ENCODE measurements at regions of chr1 and their contacts with region 1.

Region 1: DNA sequence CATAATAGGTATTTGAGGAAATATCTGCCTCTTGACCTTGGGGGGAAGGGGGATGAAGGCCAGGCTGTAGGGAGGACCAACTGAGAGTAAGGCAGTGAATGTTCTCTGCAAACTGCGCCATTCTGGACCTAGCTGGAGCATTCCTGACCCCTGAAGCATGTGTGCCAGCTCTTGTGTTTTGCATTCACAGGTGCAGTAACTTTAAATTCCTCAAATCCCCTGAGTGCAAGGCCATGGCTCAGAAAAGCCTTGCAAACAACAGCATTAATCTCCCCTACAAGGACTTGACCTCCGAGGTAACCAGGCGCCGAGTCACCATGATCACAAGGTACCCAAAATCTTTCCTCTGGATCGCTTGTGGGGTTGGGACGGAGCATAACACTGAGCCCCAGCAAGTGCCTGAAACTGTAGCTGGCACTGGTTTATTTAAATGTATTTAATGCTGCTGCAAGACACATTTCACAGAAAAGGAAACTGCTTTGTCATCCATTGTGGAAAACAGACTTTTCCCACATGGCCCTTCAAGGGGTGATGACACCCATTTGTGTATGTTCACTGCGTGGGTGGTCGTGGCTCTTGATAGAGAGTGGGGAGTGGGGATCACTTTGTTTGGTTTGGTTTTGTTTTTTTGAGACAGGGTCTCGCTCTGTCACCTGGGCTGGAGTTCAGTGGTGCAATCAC is 1.7 kb downstream of the MYOCOS start:
- DNase-seq: no peak
- H3K4me3 ChIP-seq: no peak overlapping the region
- H3K27ac ChIP-seq: no peak overlapping the region
- H3K4me1 ChIP-seq: no peaks in the 10 kb centered on the region
- H3K27me3 ChIP-seq: no peaks in the 10 kb centered on the region
- CTCF ChIP-seq: no peak

Region 2: GRCh38 chr1:171635661-171636060 is 11.9 kb after region 1 on chr1:
- CTCF ChIA-PET with region 1: interaction called, 13 read pairs
- POLR2A ChIA-PET with region 1: no interaction called
- intact Hi-C with region 1: no loop called
- DNase-seq: no peak
- H3K4me3 ChIP-seq: no peak overlapping the region
- H3K27ac ChIP-seq: no peak overlapping the region
- H3K4me1 ChIP-seq: no peaks in the 10 kb centered on the region
- H3K27me3 ChIP-seq: no peaks in the 10 kb centered on the region
- CTCF ChIP-seq: no peak

Region 3: DNA sequence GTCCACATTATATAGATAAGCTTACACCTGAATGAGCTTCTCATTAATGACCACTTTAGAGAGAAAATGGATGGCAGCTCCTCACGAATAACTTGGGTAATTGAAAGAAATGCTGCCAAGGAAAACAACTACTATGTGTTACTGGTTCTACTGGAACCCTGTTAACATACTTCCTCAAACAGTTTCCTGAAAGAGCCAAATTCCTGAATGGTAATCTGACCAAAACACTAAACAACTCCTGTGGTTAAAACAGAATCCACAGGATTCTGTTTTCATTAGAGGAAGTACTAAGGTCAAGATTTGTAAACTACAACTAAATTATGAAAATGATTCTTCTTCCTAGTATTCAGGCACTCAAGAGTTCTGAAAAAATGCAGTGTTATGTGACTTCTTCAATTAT is 324.7 kb after region 1 on chr1:
- CTCF ChIA-PET with region 1: no interaction called
- POLR2A ChIA-PET with region 1: no interaction called
- intact Hi-C with region 1: no loop called
- DNase-seq: no peak
- H3K4me3 ChIP-seq: no peak overlapping the region
- H3K27ac ChIP-seq: no peak overlapping the region
- H3K4me1 ChIP-seq: no peaks in the 10 kb centered on the region
- H3K27me3 ChIP-seq: no peaks in the 10 kb centered on the region
- CTCF ChIP-seq: no peak

Region 4: DNA sequence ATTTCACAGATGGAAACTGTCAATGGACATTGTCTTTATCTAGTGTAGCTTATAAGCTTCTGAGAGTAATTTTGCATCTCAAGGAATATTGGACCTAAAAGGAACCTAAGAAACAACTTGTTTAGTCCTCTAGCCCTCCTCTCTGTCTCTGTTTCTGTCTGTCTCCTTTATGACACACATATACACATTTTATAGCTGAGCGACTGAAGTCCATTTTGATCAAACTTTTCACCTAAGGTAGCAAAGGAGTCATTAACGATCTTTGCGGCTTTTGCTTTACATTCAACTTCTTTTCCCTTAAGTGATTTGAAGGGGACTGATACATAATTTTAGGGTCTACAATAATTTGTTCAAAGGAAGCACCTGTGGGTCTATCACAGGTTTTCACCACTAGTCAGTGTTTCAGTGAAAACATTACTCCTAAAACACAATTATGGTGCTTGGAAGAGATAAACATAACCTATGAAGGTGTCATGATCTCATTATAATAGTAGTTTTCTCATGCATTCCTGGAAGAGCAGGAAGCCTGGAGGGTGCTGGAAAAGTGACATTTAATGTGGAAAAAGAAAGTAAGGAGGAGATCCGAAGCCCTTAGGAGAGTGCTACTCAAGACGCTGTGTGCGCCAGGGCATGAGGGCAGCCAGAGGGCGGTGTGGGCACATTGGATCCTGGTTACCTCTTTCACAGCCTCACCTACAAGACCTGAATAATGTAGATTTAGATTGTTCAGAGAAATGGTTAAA is 466.1 kb after region 1 on chr1:
- CTCF ChIA-PET with region 1: no interaction called
- POLR2A ChIA-PET with region 1: no interaction called
- intact Hi-C with region 1: no loop called
- DNase-seq: peak; percentile 65
- H3K4me3 ChIP-seq: no peak overlapping the region
- H3K27ac ChIP-seq: no peak overlapping the region
- H3K4me1 ChIP-seq: peaks cover 7% of the 10 kb centered on the region
- H3K27me3 ChIP-seq: no peaks in the 10 kb centered on the region
- CTCF ChIP-seq: peak; percentile 87